ENCODE measurements at regions of chr11 and their contacts with region 1.

Region 1: GRCh38 chr11:126303623-126304456 is at the start of gene DCPS:
- DNase-seq: peak; percentile 97
- ATAC-seq: peak; percentile 99
- total RNA-seq, gene DCPS: 10.8 TPM

Region 2: DNA sequence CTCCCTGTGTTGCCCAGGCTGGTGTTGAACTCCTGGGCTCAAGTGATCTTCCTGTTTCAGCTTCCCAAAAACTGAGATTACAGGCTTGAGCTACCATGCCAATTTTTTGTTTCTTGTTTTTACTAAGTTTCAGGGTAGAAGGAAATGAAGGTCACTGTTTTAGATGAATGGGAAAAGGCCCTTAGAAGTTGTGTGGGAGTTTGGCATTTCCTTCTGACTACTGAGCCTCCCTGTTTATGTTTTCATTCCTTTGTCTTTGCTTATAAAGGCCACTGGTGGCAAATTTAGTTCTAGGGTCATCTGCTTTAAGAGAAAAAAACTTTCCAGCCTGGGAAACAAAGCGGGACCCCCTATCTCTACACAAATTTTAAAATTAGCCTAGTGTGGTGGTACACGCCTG is 57.2 kb before region 1 on chr11:
- intact Hi-C with region 1: no loop called
- DNase-seq: no peak
- ATAC-seq: no peak

Region 3: DNA sequence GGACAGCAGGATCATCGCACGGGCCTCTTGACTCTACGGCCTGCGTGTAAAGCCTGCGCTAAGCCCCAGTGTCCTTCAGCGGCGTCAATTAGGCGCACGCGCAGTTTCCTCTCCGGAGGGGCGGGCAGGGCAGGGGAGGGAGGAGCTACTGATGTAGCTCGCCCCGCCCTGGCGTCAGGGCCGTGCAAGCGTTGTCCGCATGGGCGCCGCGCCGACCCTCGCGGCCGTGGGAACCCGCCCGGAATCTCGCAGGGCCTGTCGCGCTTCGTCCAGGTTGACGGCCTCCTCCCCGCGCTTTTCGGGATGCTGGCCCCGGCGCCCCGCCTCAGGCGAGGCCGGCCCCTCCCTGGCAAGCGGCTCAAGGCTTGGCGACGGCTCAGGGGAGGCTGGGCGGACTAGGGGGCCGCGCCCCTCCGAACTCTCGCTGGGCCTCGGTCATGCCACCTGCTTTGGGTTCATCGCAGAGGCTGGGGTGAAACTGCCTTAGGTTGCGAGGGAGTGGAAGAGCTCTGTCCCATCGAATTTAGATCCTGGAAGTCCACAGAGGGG is 112.8 kb after region 1 on chr11:
- intact Hi-C with region 1: no loop called
- DNase-seq: peak; percentile 96
- ATAC-seq: peak; percentile 77

Region 4: GRCh38 chr11:127345819-127346459 is 1042.1 kb after region 1 on chr11:
- intact Hi-C with region 1: loop called (anchors 10 kb)
- DNase-seq: no peak
- ATAC-seq: no peak

Measured in Right ventricle myocardium inferior (tissue), 1 donor.